ENCODE measurements at regions of chr1 and their contacts with region 1.

Region 1: DNA sequence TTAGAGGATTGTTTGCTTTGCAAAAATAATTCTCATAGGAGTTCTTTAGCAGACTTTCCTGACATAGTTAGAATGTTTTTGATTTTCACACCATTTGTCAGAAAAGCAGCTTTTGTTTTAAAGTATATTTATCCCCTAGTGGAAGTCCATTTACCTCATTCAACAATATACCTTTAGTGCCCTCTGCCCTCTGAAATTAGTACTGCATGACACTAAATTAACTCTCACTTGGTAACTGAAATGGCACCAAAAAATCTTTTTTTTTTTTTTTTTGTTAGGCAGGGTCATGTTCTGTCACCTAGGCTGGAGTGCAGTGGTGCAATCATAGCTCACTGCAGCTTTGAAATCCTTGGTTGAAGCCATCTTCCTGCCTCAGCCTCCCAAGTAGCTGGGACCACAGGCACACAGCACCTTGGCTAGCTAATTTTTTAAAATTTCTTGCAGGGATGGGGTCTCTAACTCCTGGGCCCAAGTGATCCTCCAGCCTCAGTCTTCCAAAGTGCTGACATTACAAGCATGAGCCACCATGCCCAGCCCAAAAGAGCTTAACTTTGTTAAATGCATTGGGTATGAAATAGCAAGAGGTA is 13.6 kb downstream of the LRRC42 start:
- DNase-seq: no peak
- H3K4me3 ChIP-seq: no peak overlapping the region
- H3K27ac ChIP-seq: no peak overlapping the region
- H3K4me1 ChIP-seq: peaks cover 14% of the 10 kb centered on the region
- H3K27me3 ChIP-seq: no peaks in the 10 kb centered on the region
- CTCF ChIP-seq: peak; percentile 65

Region 2: GRCh38 chr1:53878492-53879105 is 81.2 kb before region 1 on chr1:
- intact Hi-C with region 1: loop called (anchors 10 kb)
- DNase-seq: no peak
- H3K4me3 ChIP-seq: no peak overlapping the region
- H3K27ac ChIP-seq: no peak overlapping the region
- H3K4me1 ChIP-seq: no peaks in the 10 kb centered on the region
- H3K27me3 ChIP-seq: no peaks in the 10 kb centered on the region
- CTCF ChIP-seq: peak; percentile 67

Measured in left ventricle myocardium inferior (tissue), 1 donor.